MCF 10A (cell line): ENCODE measurements at regions of chr10 and their contacts with region 1.

Region 1: GRCh38 chr10:130110246-130111112 is at the start of gene C10orf143:
- DNase-seq: peak; percentile 97
- H3K4me3 Mint-ChIP-seq: peak within 1 kb of the TSS; percentile 85
- H3K27ac Mint-ChIP-seq: peak within 1 kb of the TSS; percentile 88
- H3K4me1 Mint-ChIP-seq: peaks cover 15% of the 10 kb centered on the region
- H3K27me3 Mint-ChIP-seq: no peaks in the 10 kb centered on the region
- CTCF ChIP-seq: no peak
- total RNA-seq, gene C10orf143: 2.9 and 4.9 TPM in 2 replicates

Region 2: DNA sequence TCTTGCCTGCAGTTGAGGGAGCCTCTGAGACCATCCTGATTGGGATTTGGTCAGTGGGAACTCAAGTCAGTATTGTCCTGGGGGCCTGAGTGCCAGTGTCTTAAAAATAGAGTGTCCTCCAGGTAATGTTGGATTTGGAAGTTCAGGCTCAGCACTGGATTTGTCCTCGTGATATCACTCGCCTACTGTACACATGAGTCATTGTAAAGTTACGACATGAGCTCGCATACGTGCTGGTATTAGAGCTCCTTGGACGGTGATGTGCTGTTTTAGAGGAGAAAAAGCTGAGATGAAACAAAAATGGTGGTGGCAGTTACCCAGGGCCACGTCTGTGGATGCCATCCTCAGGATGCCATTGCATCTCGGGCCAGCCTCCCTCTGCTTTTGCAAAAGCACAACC is 565.2 kb before region 1 on chr10:
- CTCF ChIA-PET with region 1: no interaction called
- POLR2A ChIA-PET with region 1: interaction called, 3 read pairs
- intact Hi-C with region 1: loop called (anchors 2 kb)
- DNase-seq: peak; percentile 80
- H3K4me3 Mint-ChIP-seq: no peak overlapping the region
- H3K27ac Mint-ChIP-seq: no peak overlapping the region
- H3K4me1 Mint-ChIP-seq: peaks cover 11% of the 10 kb centered on the region
- H3K27me3 Mint-ChIP-seq: no peaks in the 10 kb centered on the region
- CTCF ChIP-seq: no peak

Region 3: GRCh38 chr10:129853562-129853903 is 256.9 kb before region 1 on chr10:
- CTCF ChIA-PET with region 1: interaction called, 15 read pairs
- POLR2A ChIA-PET with region 1: interaction called, 12 read pairs
- intact Hi-C with region 1: no loop called
- DNase-seq: peak; percentile 5
- H3K4me3 Mint-ChIP-seq: no peak overlapping the region
- H3K27ac Mint-ChIP-seq: no peak overlapping the region
- H3K4me1 Mint-ChIP-seq: no peaks in the 10 kb centered on the region
- H3K27me3 Mint-ChIP-seq: no peaks in the 10 kb centered on the region
- CTCF ChIP-seq: peak; percentile 13

Region 4: DNA sequence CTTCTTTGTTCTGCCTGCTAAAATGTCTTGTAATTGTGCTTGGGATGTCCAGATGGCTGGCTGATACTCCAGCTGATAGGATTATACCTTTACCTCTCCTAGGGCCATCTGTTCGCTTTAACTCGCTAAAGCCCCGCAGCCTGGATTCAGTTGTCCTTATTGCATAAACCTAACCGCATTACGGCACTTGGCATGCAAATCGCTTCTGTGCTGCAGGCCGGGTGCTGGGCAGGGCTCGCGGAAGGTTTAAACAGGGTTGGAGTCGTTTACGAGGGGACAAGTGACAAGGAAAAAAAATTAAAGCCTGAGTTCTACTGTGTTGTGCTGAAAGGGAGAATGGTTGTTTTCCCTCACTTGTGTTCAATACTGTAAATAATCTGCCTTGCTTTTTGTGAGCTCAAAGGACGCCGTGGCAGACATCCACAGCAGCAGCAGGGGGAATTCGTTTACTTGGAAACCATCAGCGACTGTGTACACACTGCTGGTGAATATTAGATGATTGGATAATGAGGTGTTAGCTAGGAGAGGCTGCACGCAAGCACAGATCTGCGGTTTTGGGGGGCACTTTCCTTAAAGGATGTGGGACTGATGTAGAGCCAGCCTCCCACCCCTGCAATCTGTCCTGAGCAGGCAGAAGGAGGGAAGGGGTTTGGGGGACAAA is 239.4 kb before region 1 on chr10:
- CTCF ChIA-PET with region 1: no interaction called
- POLR2A ChIA-PET with region 1: no interaction called
- intact Hi-C with region 1: no loop called
- DNase-seq: no peak
- H3K4me3 Mint-ChIP-seq: no peak overlapping the region
- H3K27ac Mint-ChIP-seq: no peak overlapping the region
- H3K4me1 Mint-ChIP-seq: no peaks in the 10 kb centered on the region
- H3K27me3 Mint-ChIP-seq: no peaks in the 10 kb centered on the region
- CTCF ChIP-seq: no peak

Region 5: DNA sequence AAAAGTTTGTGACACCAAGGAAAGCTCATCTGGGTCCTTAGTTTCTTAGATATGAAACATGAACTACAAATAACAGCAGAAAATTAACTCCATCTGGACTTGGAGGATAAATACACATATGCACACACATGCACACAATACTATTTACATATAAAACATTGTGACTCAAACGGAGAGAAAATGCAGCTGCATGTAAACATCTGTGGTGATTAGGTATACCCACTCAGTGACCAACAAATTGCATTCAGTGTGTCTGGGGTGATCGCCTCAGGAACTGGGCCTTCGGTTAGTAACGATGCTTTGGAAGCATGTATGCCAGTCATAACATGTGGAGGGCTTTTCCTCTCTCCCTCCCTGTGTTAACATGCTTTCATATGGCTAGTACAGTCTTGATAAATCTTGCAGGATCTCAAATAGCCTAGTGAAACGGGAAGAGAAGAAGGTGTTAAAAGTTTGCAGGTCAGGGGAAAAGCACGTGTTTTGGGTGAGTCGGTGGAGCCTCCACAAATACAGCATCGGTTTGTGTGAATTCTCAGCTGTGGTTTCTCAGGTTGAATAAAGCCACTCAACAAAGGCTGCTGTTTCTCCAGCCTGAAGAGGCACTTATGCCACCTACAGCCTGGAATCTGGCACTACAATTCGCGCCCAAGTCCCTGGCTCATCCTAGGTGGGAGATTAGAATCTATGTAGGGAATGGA is 17.0 kb after region 1 on chr10:
- CTCF ChIA-PET with region 1: interaction called, 64 read pairs
- POLR2A ChIA-PET with region 1: interaction called, 43 read pairs
- intact Hi-C with region 1: no loop called
- DNase-seq: peak; percentile 73
- H3K4me3 Mint-ChIP-seq: no peak overlapping the region
- H3K27ac Mint-ChIP-seq: no peak overlapping the region
- H3K4me1 Mint-ChIP-seq: peaks cover 6% of the 10 kb centered on the region
- H3K27me3 Mint-ChIP-seq: no peaks in the 10 kb centered on the region
- CTCF ChIP-seq: peak; percentile 87

Region 6: GRCh38 chr10:130136226-130137089 is 26.0 kb after region 1 on chr10 and contains the start of gene GLRX3:
- CTCF ChIA-PET with region 1: interaction called, 64 read pairs
- POLR2A ChIA-PET with region 1: interaction called, 275 read pairs
- intact Hi-C with region 1: loop called (anchors 1 kb)
- DNase-seq: peak; percentile 83
- H3K4me3 Mint-ChIP-seq: peak within 1 kb of the TSS; percentile 86
- H3K27ac Mint-ChIP-seq: peak within 1 kb of the TSS; percentile 94
- H3K4me1 Mint-ChIP-seq: peaks cover 15% of the 10 kb centered on the region
- H3K27me3 Mint-ChIP-seq: no peaks in the 10 kb centered on the region
- CTCF ChIP-seq: no peak
- total RNA-seq, gene GLRX3: 154 and 177 TPM in 2 replicates

Region 7: GRCh38 chr10:130141878-130142277 is 31.4 kb after region 1 on chr10:
- CTCF ChIA-PET with region 1: interaction called, 16 read pairs
- POLR2A ChIA-PET with region 1: interaction called, 275 read pairs
- intact Hi-C with region 1: no loop called
- DNase-seq: no peak
- H3K4me3 Mint-ChIP-seq: no peak overlapping the region
- H3K27ac Mint-ChIP-seq: peak overlapping the region; percentile 31
- H3K4me1 Mint-ChIP-seq: peaks cover 30% of the 10 kb centered on the region
- H3K27me3 Mint-ChIP-seq: no peaks in the 10 kb centered on the region
- CTCF ChIP-seq: no peak